BJ (cell line): ENCODE measurements at regions of chr9 and their contacts with region 1.

Region 1: GRCh38 chr9:122099271-122099869 is 6.3 kb upstream of the TTLL11 start:
- DNase-seq: no peak
- H3K4me3 ChIP-seq: no peak overlapping the region
- H3K27me3 ChIP-seq: no peaks in the 10 kb centered on the region; the same call in 1 of the 2 replicates
- CTCF ChIP-seq: peak; percentile 83

Region 2: GRCh38 chr9:122087406-122088200 is 11.8 kb before region 1 on chr9:
- CTCF ChIA-PET with region 1: interaction called, 23 read pairs
- POLR2A ChIA-PET with region 1: no interaction called
- DNase-seq: no peak
- H3K4me3 ChIP-seq: no peak overlapping the region
- H3K27me3 ChIP-seq: no peaks in the 10 kb centered on the region
- CTCF ChIP-seq: no peak

Region 3: DNA sequence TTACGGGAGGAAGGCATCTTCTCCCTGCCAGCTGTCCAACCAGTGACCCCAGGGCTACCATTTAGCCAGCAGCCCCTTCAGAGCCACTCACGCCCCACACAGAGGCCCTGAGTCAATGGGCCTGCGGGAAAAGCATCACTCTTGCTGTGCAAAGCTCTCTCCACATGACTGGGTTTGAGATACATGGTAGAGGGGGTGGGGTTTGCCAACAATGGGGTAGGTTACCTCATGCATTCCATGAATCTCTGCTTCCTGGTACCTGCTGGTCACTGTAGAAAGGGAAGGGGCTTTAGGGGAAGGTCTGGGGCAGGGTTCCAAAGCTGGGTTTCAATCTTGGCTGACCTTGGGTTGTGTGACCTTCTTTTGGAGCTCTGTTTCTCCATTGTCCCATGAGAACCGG is 16.7 kb after region 1 on chr9:
- CTCF ChIA-PET with region 1: interaction called, 212 read pairs
- POLR2A ChIA-PET with region 1: no interaction called
- DNase-seq: no peak
- H3K4me3 ChIP-seq: no peak overlapping the region
- H3K27me3 ChIP-seq: peaks cover 16% of the 10 kb centered on the region
- CTCF ChIP-seq: no peak

Region 4: GRCh38 chr9:122356627-122357026 is 257.3 kb after region 1 on chr9:
- CTCF ChIA-PET with region 1: interaction called, 119 read pairs
- POLR2A ChIA-PET with region 1: no interaction called
- DNase-seq: no peak
- H3K4me3 ChIP-seq: no peak overlapping the region
- H3K27me3 ChIP-seq: no peaks in the 10 kb centered on the region
- CTCF ChIP-seq: peak; percentile 48

Region 5: DNA sequence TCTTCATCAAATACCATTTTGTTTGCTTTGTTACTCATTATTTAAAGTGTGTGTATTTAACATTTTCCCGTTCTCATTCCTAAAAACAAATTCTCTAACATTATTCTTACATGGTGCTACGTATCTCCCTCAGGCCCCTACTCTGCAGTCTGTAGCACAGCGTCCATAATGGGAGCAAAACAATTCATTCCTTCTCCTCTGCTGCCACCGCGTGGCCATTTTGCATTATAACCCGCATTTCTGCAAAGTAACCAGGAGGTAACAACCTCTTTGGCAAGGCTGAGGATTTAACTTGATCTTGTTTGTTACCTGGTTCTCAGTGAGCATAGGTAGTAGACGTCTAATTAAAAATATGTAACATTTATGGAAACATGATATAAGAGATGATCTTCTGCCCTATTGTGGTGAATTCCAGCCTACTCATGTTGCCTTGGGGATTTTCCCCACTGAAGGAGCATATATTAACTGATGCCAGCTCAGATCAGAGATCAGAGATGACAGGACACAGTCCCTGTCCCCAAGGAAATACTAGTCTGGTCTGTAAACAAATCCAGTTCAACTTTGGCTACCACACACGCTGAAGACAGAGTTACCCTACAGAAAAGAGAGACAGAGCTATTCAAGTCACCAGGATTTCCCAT is 711.1 kb after region 1 on chr9:
- CTCF ChIA-PET with region 1: interaction called, 12 read pairs
- POLR2A ChIA-PET with region 1: no interaction called
- DNase-seq: no peak
- H3K4me3 ChIP-seq: no peak overlapping the region
- H3K27me3 ChIP-seq: no peaks in the 10 kb centered on the region
- CTCF ChIP-seq: peak; percentile 59

Region 6: DNA sequence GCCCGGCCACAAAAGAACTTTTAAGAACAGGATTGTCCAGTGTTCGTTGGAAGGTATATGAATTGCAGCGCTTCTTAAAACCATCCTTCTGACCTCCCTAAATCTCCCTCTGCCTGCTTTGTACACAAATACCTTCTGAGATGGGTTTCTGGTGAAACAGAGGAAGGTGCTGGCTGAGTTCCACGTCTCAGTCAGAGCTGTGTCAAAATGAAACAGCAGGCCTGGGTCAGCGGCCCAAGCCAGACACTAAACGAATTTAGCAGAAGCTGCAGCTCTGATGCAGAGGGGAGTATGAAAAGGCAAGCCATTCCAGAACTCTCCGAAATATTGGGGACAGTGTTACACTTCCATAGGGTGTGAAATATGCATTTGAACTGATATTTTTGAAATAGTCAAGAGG is 1218.8 kb after region 1 on chr9:
- CTCF ChIA-PET with region 1: no interaction called
- POLR2A ChIA-PET with region 1: no interaction called
- DNase-seq: no peak
- H3K4me3 ChIP-seq: no peak overlapping the region
- H3K27me3 ChIP-seq: peaks cover 9% of the 10 kb centered on the region
- CTCF ChIP-seq: no peak